ENCODE measurements at regions of chr19 and their contacts with region 1.

Region 1: DNA sequence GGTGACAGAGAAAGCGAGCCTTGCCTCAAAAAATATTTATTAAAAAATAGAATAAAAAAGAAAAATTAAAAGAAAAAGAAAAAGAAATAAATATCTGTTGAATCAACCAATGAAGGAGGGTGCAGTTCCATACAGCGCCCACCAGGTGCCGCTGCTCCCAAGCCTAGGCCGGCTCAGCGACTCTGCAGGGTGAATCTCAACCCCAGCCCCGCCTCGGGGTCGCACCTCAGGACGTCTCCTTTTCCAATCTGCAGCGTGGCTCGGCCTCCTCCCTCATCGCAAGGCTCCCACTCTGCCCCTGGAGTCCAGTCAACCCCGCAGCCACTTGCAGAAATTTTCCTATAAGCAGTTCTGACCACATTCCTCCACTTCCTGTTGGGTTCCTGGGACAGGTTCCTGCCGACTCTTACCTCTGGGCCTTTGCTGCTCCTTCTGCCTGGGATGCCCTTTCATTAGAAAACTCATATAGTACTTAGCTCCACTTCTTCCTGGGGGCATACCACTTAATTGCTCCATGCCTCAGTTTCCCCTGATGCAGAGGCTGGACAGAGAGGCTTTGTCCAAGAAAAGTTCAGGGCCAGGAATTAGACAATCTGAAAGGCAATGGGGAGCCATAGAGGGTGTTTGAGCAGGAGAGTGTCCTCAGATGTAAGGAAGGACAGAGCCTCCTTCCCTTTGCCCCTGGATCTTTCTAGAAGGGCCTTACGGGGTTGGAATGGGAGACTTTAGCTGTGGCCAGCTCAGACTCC is 24.3 kb downstream of the NFILZ start:
- DNase-seq: peak; percentile 72
- H3K4me3 ChIP-seq: peak overlapping the region; percentile 22
- H3K27ac ChIP-seq: no peak overlapping the region
- H3K4me1 ChIP-seq: no peaks in the 10 kb centered on the region
- H3K27me3 ChIP-seq: no peaks in the 10 kb centered on the region
- CTCF ChIP-seq: peak; percentile 88

Region 2: DNA sequence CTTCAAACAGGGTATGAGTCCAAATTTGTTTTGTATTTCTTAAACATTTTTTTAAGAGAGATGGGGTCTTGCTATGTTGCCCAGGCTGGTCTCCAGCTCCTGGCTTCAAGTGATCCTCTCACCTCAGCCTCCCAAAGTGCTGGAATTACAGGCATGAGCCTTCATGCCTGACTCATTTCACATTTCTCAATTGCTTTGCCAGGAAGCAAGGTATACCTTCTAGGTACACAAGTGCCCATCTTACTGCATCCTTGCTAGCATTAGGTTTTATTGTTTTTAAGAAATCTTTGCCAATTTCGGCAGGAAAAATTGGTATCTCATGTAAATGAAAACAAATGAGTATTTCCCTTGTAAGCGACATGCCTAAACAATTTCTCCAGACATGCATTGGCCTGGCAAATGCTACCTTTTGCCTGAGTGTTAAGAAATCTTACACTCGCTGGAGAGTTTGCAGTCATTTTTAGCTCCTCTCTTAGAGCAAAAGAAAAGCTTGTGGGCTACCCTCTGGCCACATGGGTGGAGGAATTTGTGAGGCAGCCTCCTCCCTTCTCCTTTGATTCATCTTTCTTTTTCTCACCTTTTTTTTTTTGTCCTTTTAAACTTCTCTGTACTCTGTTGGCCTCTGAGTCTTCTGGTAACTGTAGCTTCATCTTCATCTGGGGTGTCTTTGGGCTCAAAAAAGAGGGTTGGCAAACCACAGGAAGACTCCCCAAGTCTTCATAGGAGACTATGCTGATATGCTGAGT is 10.9 kb after region 1 on chr19:
- CTCF ChIA-PET with region 1: no interaction called
- POLR2A ChIA-PET with region 1: no interaction called
- intact Hi-C with region 1: no loop called
- DNase-seq: no peak
- H3K4me3 ChIP-seq: no peak overlapping the region
- H3K27ac ChIP-seq: no peak overlapping the region
- H3K4me1 ChIP-seq: peaks cover 8% of the 10 kb centered on the region
- H3K27me3 ChIP-seq: no peaks in the 10 kb centered on the region
- CTCF ChIP-seq: no peak

Region 3: GRCh38 chr19:8697671-8698432 is 43.1 kb after region 1 on chr19:
- CTCF ChIA-PET with region 1: interaction called, 12 read pairs
- POLR2A ChIA-PET with region 1: no interaction called
- intact Hi-C with region 1: loop called (anchors 1 kb)
- DNase-seq: no peak
- H3K4me3 ChIP-seq: no peak overlapping the region
- H3K27ac ChIP-seq: no peak overlapping the region
- H3K4me1 ChIP-seq: peaks cover 6% of the 10 kb centered on the region
- H3K27me3 ChIP-seq: no peaks in the 10 kb centered on the region
- CTCF ChIP-seq: peak; percentile 58

Region 4: DNA sequence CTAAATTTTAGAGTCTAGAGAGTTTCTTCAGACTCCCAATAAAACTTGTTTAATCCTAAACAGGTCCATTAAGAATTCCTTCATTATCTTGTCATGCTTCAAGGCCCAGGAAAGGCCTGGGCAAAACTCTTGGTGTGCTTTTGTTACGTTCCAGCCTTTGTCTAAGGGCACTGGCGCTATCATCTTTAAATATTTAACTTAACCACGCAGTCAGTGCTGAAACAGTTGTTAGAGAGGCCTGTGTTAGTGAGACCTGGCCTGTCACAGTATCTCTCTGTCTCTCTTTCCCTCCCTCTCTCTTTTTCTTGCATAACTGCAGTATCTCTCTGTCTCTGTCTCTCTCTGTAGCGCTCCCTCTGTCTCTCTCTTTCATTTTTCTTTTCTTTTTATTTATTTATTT is 423.9 kb after region 1 on chr19:
- CTCF ChIA-PET with region 1: no interaction called
- POLR2A ChIA-PET with region 1: no interaction called
- intact Hi-C with region 1: loop called (anchors 2 kb)
- DNase-seq: no peak
- H3K4me3 ChIP-seq: no peak overlapping the region
- H3K27ac ChIP-seq: no peak overlapping the region
- H3K4me1 ChIP-seq: peaks cover 11% of the 10 kb centered on the region
- H3K27me3 ChIP-seq: no peaks in the 10 kb centered on the region
- CTCF ChIP-seq: no peak

Measured in A673 (cell line).